Activated CD4-positive, alpha-beta memory T cell treated with anti-CD3 and anti-CD28 coated beads for 36 hours (primary cell): ENCODE measurements at regions of chr12 and their contacts with region 1.

Region 1: DNA sequence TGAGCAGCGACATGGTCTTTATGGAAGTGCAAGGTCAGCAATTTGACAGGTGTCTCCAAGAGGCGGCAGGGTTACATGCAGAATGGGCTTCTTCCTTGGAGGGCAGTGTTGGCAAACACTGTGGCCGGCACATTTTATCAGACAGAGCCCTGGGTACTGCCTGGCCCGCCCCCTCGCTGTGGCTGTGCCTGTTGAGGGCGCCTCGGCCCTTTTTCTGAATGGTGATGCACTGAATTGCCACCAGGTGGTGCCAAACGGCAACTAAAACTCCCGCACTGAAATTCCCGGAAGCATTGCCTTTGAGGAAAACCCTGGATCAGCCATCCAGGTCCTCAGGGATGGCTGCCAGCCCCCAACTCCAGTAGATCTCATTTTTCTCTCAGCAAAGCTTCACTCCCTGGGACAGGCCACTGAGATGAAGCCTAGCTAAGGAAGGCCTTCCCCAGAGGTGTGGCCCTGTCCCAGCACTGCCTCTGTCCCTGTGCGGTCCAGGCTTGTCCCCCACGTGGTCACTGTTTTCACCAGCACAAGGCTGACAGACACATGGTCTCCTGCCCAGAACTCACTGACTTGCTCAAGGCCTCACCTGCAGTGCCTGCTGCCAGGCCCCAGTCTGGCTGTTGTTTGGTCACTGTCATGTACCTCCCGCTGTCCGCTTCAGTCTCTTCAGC is 73.6 kb downstream of the TESC start:
- DNase-seq: peak; percentile 60
- H3K4me3 Mint-ChIP-seq: no peak overlapping the region
- H3K27ac Mint-ChIP-seq: peak overlapping the region; percentile 45
- H3K4me1 Mint-ChIP-seq: peaks cover 1% of the 10 kb centered on the region
- H3K27me3 Mint-ChIP-seq: no peaks in the 10 kb centered on the region

Region 2: DNA sequence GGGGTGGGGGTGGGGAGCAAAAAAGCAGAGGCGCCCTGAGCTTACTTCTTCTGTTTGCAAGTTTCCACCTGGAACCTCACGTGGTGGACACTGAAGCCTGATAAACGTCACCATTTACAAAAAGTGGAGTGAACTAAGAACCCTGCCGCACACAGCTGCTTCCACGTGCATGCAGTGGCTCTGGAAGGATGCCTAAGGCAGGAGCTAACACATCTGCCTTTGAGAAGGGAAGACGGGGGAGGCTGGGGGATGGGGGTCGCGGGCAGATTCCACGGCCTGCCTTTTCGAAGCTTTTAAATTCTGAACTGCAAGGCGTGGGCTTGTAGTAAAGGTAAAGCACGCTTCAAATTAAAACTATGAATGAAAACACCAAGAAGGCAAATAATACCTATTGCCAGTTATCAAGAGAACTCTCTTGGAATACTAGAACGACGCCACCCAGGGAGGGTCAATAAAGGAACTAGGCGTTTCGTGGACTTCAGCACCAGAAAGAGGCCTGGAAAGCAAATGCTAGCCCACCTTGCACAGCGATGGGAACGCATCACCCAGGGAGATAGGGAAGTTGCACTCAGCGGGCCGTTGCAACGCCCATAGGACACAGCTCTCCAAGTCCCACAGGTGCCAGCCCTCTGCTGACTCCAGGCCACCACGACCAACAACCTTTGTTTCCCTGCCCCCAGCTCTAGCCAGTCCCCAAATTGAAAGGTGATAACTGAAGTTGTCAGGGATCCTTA is 11.8 kb after region 1 on chr12:
- CTCF ChIA-PET with region 1: interaction called, 4 read pairs
- POLR2A ChIA-PET with region 1: no interaction called
- intact Hi-C with region 1: loop called (anchors 1 kb)
- DNase-seq: no peak
- H3K4me3 Mint-ChIP-seq: no peak overlapping the region
- H3K27ac Mint-ChIP-seq: no peak overlapping the region
- H3K4me1 Mint-ChIP-seq: no peaks in the 10 kb centered on the region
- H3K27me3 Mint-ChIP-seq: peaks cover 6% of the 10 kb centered on the region

Region 3: GRCh38 chr12:117119592-117120198 is 94.1 kb after region 1 on chr12:
- CTCF ChIA-PET with region 1: interaction called, 96 read pairs
- POLR2A ChIA-PET with region 1: no interaction called
- intact Hi-C with region 1: loop called (anchors 1 kb)
- DNase-seq: peak; percentile 33
- H3K4me3 Mint-ChIP-seq: no peak overlapping the region
- H3K27ac Mint-ChIP-seq: no peak overlapping the region
- H3K4me1 Mint-ChIP-seq: no peaks in the 10 kb centered on the region
- H3K27me3 Mint-ChIP-seq: no peaks in the 10 kb centered on the region

Region 4: GRCh38 chr12:117155278-117156060 is 129.9 kb after region 1 on chr12:
- CTCF ChIA-PET with region 1: interaction called, 6 read pairs
- POLR2A ChIA-PET with region 1: no interaction called
- intact Hi-C with region 1: loop called (anchors 1 kb)
- DNase-seq: peak; percentile 89
- H3K4me3 Mint-ChIP-seq: no peak overlapping the region
- H3K27ac Mint-ChIP-seq: no peak overlapping the region
- H3K4me1 Mint-ChIP-seq: peaks cover 33% of the 10 kb centered on the region
- H3K27me3 Mint-ChIP-seq: no peaks in the 10 kb centered on the region